CD8-positive, alpha-beta T cell (primary cell): ENCODE measurements at regions of chr6 and their contacts with region 1.

Region 1: GRCh38 chr6:127918506-127919427 is 17.9 kb upstream of the THEMIS start:
- DNase-seq: peak in 3 of 9 experiments; percentile 24 to 78 (median 61)
- ATAC-seq: peak; percentile 74
- H3K4me3 ChIP-seq: peak overlapping the region; percentile 57 to 62
- H3K4me3 Mint-ChIP-seq: peak overlapping the region; percentile 92
- H3K27ac ChIP-seq: peak overlapping the region; percentile 39 to 58
- H3K27ac Mint-ChIP-seq: peak overlapping the region; percentile 95
- H3K4me1 ChIP-seq: peaks cover 73% of the 10 kb centered on the region
- H3K4me1 Mint-ChIP-seq: peaks cover 80% of the 10 kb centered on the region
- H3K27me3 ChIP-seq: no peaks in the 10 kb centered on the region
- H3K27me3 Mint-ChIP-seq: no peaks in the 10 kb centered on the region
- CTCF ChIP-seq: no peak

Region 2: DNA sequence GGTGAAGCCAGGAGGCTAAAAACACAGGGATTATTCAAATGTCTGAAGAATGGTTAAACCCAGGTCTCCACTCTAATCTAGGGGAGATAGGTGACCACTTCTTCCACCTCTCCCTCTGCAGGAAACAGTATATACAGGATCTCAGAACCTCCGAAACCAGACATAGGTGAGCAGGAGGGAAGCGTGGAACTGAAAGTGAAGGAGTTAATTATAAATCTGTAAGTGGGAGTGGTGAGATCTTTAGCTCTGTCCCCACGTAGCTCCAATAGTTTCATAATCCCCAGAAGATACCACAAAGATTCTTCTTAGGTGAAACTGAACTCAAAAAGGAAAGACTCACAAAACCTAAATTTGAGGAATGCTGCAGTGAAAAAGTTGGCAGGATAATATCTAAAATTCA is 94.7 kb before region 1 on chr6:
- CTCF ChIA-PET with region 1: no interaction called
- POLR2A ChIA-PET with region 1: no interaction called
- intact Hi-C with region 1: no loop called
- DNase-seq: no peak
- ATAC-seq: no peak
- H3K4me3 ChIP-seq: no peak overlapping the region
- H3K4me3 Mint-ChIP-seq: peak overlapping the region; percentile 9
- H3K27ac ChIP-seq: no peak overlapping the region
- H3K27ac Mint-ChIP-seq: peak overlapping the region; percentile 77
- H3K4me1 ChIP-seq: peaks cover 46% of the 10 kb centered on the region
- H3K4me1 Mint-ChIP-seq: peaks cover 80% of the 10 kb centered on the region
- H3K27me3 ChIP-seq: no peaks in the 10 kb centered on the region
- H3K27me3 Mint-ChIP-seq: no peaks in the 10 kb centered on the region
- CTCF ChIP-seq: no peak

Region 3: DNA sequence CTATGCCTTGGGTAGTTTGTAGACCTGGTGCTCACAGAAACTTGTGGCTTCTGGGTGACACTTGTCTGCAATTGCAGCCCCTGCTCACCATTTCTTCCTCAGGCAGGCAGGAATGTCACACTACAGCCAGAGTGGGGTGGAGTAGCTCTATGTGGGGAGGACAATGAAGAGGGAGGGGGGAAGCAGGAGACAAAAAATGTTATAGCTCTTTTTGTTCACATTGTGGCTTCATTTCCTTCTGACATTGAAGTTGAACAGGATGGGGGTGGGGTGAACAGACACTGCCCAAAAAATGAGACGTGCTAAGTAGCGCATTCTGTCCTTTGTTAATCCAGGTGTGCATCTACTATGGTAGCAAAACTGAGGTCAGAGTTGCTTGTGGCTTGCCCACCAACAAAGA is 17.8 kb before region 1 on chr6 and contains the start of gene THEMIS:
- CTCF ChIA-PET with region 1: interaction called, 4 read pairs
- POLR2A ChIA-PET with region 1: interaction called, 8 read pairs
- intact Hi-C with region 1: loop called in 1 of 2 experiments (anchors 2 kb)
- DNase-seq: peak in 8 of 9 experiments; percentile 29 to 86 (median 64)
- ATAC-seq: peak; percentile 72
- H3K4me3 ChIP-seq: peak within 1 kb of the TSS; percentile 69 to 79
- H3K4me3 Mint-ChIP-seq: peak within 1 kb of the TSS; percentile 98
- H3K27ac ChIP-seq: peak within 1 kb of the TSS; percentile 55 to 77
- H3K27ac Mint-ChIP-seq: peak within 1 kb of the TSS; percentile 99
- H3K4me1 ChIP-seq: peaks cover 39% of the 10 kb centered on the region
- H3K4me1 Mint-ChIP-seq: peaks cover 61% of the 10 kb centered on the region
- H3K27me3 ChIP-seq: no peaks in the 10 kb centered on the region
- H3K27me3 Mint-ChIP-seq: no peaks in the 10 kb centered on the region
- CTCF ChIP-seq: no peak
- total RNA-seq, gene THEMIS: 26.3 to 29.3 TPM

Region 4: GRCh38 chr6:127907960-127908640 is 10.7 kb before region 1 on chr6:
- CTCF ChIA-PET with region 1: interaction called, 18 read pairs
- POLR2A ChIA-PET with region 1: interaction called, 23 read pairs
- intact Hi-C with region 1: loop called in 1 of 2 experiments (anchors 1 kb)
- DNase-seq: peak in 2 of 9 experiments; percentile 48 to 66
- ATAC-seq: peak; percentile 69
- H3K4me3 ChIP-seq: peak overlapping the region; percentile 25 to 52
- H3K4me3 Mint-ChIP-seq: peak overlapping the region; percentile 80
- H3K27ac ChIP-seq: peak overlapping the region; percentile 42 to 88
- H3K27ac Mint-ChIP-seq: peak overlapping the region; percentile 88
- H3K4me1 ChIP-seq: peaks cover 24% of the 10 kb centered on the region
- H3K4me1 Mint-ChIP-seq: peaks cover 68% of the 10 kb centered on the region
- H3K27me3 ChIP-seq: no peaks in the 10 kb centered on the region
- H3K27me3 Mint-ChIP-seq: no peaks in the 10 kb centered on the region
- CTCF ChIP-seq: no peak

Region 5: DNA sequence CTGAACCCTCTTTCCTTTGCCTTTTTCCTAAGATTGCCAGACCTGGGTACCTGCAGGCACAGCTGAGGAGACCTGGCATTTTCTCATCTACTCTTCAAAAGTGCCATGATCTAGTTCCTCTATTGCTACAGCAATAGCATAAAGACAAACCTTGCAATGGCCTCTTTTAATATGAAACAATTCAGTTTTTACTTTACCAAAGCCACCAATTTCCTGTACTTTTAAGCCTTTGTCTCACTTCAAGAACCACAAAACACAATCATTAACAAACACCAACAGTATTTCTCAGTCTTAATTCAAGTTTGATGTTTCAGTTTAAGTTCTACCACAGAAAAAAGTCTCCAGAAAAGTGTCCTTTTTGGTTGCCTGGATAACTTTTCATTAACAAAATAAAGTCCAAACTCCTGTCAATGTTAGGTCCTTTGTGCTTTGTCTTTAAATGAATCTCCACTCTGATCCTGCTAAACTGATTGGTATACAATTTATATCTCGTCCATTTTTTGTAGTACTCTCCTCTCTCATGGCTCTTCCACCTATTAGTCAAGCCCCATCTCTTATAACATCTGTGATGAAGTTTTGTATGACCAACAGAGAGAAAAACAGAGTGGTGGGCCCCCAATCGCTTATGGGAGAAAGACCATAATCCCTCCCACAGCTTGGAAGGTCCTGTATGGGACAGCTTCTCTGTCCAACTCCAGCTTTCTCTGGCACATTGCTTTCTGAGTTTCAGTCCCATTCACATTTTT is 32.6 kb after region 1 on chr6:
- CTCF ChIA-PET with region 1: interaction called, 9 read pairs
- POLR2A ChIA-PET with region 1: interaction called, 6 read pairs
- intact Hi-C with region 1: loop called in 1 of 2 experiments (anchors 5 kb)
- DNase-seq: peak in 2 of 9 experiments; percentile 55 to 76
- ATAC-seq: peak; percentile 83
- H3K4me3 ChIP-seq: peak overlapping the region; percentile 14 to 25
- H3K4me3 Mint-ChIP-seq: peak overlapping the region; percentile 68
- H3K27ac ChIP-seq: peak overlapping the region; percentile 40 to 63
- H3K27ac Mint-ChIP-seq: peak overlapping the region; percentile 92
- H3K4me1 ChIP-seq: peaks cover 58% of the 10 kb centered on the region
- H3K4me1 Mint-ChIP-seq: peaks cover 75% of the 10 kb centered on the region
- H3K27me3 ChIP-seq: no peaks in the 10 kb centered on the region
- H3K27me3 Mint-ChIP-seq: no peaks in the 10 kb centered on the region
- CTCF ChIP-seq: no peak